ENCODE measurements at regions of chr6 and their contacts with region 1.

Region 1: GRCh38 chr6:166275714-166276166 is 32.5 kb downstream of the PRR18 start:
- DNase-seq: peak; percentile 71
- H3K4me3 Mint-ChIP-seq: no peak overlapping the region
- H3K27ac Mint-ChIP-seq: no peak overlapping the region
- H3K4me1 Mint-ChIP-seq: peaks cover 6% of the 10 kb centered on the region
- H3K27me3 Mint-ChIP-seq: peaks cover 15% of the 10 kb centered on the region

Region 2: GRCh38 chr6:166289207-166290060 is 13.7 kb after region 1 on chr6:
- intact Hi-C with region 1: no loop called
- DNase-seq: no peak
- H3K4me3 Mint-ChIP-seq: no peak overlapping the region
- H3K27ac Mint-ChIP-seq: no peak overlapping the region
- H3K4me1 Mint-ChIP-seq: no peaks in the 10 kb centered on the region
- H3K27me3 Mint-ChIP-seq: peaks cover 12% of the 10 kb centered on the region

Region 3: GRCh38 chr6:166351715-166352285 is 76.1 kb after region 1 on chr6:
- intact Hi-C with region 1: no loop called
- DNase-seq: no peak
- H3K4me3 Mint-ChIP-seq: no peak overlapping the region
- H3K27ac Mint-ChIP-seq: no peak overlapping the region
- H3K4me1 Mint-ChIP-seq: peaks cover 14% of the 10 kb centered on the region
- H3K27me3 Mint-ChIP-seq: peaks cover 40% of the 10 kb centered on the region

Region 4: GRCh38 chr6:166402582-166403277 is 127.0 kb after region 1 on chr6:
- intact Hi-C with region 1: loop called (anchors 1 kb)
- DNase-seq: no peak
- H3K4me3 Mint-ChIP-seq: no peak overlapping the region
- H3K27ac Mint-ChIP-seq: no peak overlapping the region
- H3K4me1 Mint-ChIP-seq: peaks cover 5% of the 10 kb centered on the region
- H3K27me3 Mint-ChIP-seq: peaks cover 10% of the 10 kb centered on the region